CD4-positive, alpha-beta memory T cell (primary cell): ENCODE measurements at regions of chr2 and their contacts with region 1.

Region 1: GRCh38 chr2:218979846-218980734 is 4.9 kb downstream of the FEV start:
- DNase-seq: peak; percentile 80 to 84 (median 83)
- H3K4me3 ChIP-seq: peak overlapping the region in 1 of 2 donors; percentile 27
- H3K4me3 Mint-ChIP-seq: peak overlapping the region; percentile 54 to 93 (median 80)
- H3K27ac ChIP-seq: no peak overlapping the region
- H3K27ac Mint-ChIP-seq: peak overlapping the region in 3 of 7 donors; percentile 10 to 64 (median 12)
- H3K4me1 ChIP-seq: peaks cover 41% of the 10 kb centered on the region
- H3K4me1 Mint-ChIP-seq: peaks cover 14 to 45% (median 22%) of the 10 kb centered on the region in 4 donors
- H3K27me3 ChIP-seq: peaks cover 37% of the 10 kb centered on the region
- H3K27me3 Mint-ChIP-seq: peaks cover 63 to 69% of the 10 kb centered on the region in 2 donors

Region 2: GRCh38 chr2:218962859-218963492 is 17.1 kb before region 1 on chr2:
- CTCF ChIA-PET with region 1: interaction called, 13 read pairs
- POLR2A ChIA-PET with region 1: no interaction called
- intact Hi-C with region 1: no loop called
- DNase-seq: peak; percentile 46 to 59 (median 53)
- H3K4me3 ChIP-seq: no peak overlapping the region
- H3K4me3 Mint-ChIP-seq: peak overlapping the region in 2 of 8 donors; percentile 30 to 52
- H3K27ac ChIP-seq: no peak overlapping the region
- H3K27ac Mint-ChIP-seq: peak overlapping the region in 1 of 7 donors; percentile 27
- H3K4me1 ChIP-seq: peaks cover 27% of the 10 kb centered on the region
- H3K4me1 Mint-ChIP-seq: peaks cover 8 to 31% (median 17%) of the 10 kb centered on the region in 4 donors
- H3K27me3 ChIP-seq: peaks cover 47% of the 10 kb centered on the region
- H3K27me3 Mint-ChIP-seq: peaks cover 56% of the 10 kb centered on the region in 2 donors

Region 3: GRCh38 chr2:218995972-218996711 is 16.1 kb after region 1 on chr2:
- CTCF ChIA-PET with region 1: interaction called, 53 read pairs
- POLR2A ChIA-PET with region 1: interaction called, 4 read pairs
- intact Hi-C with region 1: no loop called
- DNase-seq: peak; percentile 66 to 69 (median 67)
- H3K4me3 ChIP-seq: peak overlapping the region in 1 of 2 donors; percentile 47
- H3K4me3 Mint-ChIP-seq: peak overlapping the region in 4 of 8 donors; percentile 25 to 69 (median 40)
- H3K27ac ChIP-seq: no peak overlapping the region
- H3K27ac Mint-ChIP-seq: no peak overlapping the region
- H3K4me1 ChIP-seq: peaks cover 21% of the 10 kb centered on the region
- H3K4me1 Mint-ChIP-seq: peaks cover 0 to 21% (median 11%) of the 10 kb centered on the region in 4 donors
- H3K27me3 ChIP-seq: peaks cover 44% of the 10 kb centered on the region
- H3K27me3 Mint-ChIP-seq: peaks cover 52 to 68% of the 10 kb centered on the region in 2 donors

Region 4: DNA sequence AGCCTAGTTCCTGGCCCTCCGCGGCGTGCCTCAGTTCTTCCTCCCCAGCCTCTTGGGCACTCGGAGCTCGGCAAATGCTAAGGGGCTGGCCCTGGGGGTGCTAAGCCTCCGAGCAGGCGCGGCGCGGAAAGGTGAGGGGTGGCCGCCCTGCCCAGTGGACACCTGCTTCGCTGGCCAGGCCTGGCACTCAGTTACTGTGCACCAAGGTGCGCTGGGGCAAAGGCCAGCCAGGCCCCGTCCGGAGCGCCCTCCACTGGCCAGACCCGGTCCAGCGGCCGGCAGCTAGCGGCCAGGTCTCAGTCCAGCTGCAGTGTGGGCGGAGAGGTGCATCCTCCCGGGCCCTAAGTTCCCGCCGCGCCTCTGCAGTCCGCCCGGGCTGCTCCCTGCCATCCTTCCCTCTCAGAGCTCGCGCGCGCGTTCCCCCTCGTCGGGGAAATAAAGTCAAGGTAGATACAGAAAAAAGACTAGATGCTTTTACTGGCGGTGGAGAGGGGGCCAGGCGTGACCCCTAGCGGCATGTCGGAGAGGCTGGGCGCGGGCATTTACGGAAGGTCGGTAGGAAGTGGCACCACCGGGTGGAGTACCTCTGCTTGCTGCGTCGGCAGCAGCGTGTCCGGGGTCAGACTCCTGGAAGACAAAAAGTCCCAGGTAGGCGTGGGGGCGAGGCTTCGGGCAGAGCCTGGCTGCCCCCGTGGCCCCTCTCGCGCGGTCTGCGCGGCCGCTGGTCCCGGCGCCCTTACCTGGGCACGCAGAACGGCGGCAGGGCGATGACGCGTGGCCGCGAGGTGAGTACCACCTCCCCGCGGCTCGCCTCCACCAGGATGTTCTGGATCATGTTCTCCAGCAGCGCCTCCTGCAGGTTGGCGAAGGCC is 22.5 kb after region 1 on chr2:
- CTCF ChIA-PET with region 1: interaction called, 53 read pairs
- POLR2A ChIA-PET with region 1: no interaction called
- intact Hi-C with region 1: loop called (anchors 2 kb)
- DNase-seq: peak; percentile 37 to 65 (median 44)
- H3K4me3 ChIP-seq: peak overlapping the region in 1 of 2 donors; percentile 32
- H3K4me3 Mint-ChIP-seq: peak overlapping the region; percentile 51 to 84 (median 72)
- H3K27ac ChIP-seq: no peak overlapping the region
- H3K27ac Mint-ChIP-seq: no peak overlapping the region
- H3K4me1 ChIP-seq: peaks cover 20% of the 10 kb centered on the region
- H3K4me1 Mint-ChIP-seq: peaks cover 6 to 18% (median 10%) of the 10 kb centered on the region in 4 donors
- H3K27me3 ChIP-seq: peaks cover 41% of the 10 kb centered on the region
- H3K27me3 Mint-ChIP-seq: peaks cover 47 to 60% of the 10 kb centered on the region in 2 donors